Motor neuron (in vitro differentiated cells): ENCODE measurements at regions of chr9 and their contacts with region 1.

Region 1: DNA sequence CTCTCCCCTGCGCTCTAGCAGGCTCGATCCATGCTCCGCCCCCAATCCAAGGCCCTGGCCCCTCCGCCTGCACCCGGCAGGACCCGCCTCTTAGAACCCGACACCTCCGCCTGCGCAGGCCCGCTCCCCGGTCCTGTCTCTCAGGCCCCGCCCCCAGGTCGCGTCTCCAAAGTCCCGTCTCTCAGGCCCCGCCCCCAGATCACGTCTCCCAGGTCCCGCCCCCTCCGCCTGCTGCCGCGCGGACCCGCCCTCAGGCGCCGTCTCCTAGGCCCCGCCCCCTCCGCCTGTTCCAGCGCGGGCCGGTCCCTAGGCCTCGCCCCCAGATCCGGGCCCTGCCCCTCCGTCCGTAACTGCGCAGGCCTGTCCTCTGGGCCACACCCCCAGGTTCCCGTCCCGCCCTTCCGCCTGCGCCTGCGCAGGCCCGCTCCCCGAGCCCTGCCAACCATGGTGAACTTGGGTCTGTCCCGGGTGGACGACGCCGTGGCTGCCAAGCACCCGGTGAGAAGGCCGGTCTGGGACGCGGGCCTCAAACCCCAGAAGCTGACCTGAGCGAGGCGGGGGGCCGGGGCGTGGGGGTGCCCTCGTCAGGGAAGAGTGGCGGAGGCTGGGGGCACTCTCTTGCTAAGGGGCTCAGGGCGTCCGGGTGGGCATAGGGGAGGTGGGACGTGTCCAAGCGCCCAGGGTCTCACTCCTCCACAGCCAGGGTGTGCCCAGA is at the start of gene TMEM141:
- ATAC-seq: peak; percentile 87 to 93 (median 90)
- H3K4me3 ChIP-seq: peak within 1 kb of the TSS; percentile 45 to 85 (median 76)
- H3K27ac ChIP-seq: peak within 1 kb of the TSS; percentile 44 to 76
- H3K4me1 ChIP-seq: peaks cover 13 to 33% of the 10 kb centered on the region in 2 donors
- total RNA-seq, gene TMEM141: 21.7 to 92.7 (median 39.5) TPM

Region 2: GRCh38 chr9:137034863-137035761 is 244.0 kb after region 1 on chr9:
- in situ Hi-C with region 1: loop called in 7 of 9 experiments (anchors 25 kb)
- ATAC-seq: peak; percentile 81 to 98 (median 85)
- H3K4me3 ChIP-seq: no peak overlapping the region
- H3K27ac ChIP-seq: no peak overlapping the region
- H3K4me1 ChIP-seq: peaks cover 7 to 11% of the 10 kb centered on the region in 2 donors